CD4-positive, alpha-beta T cell (primary cell): ENCODE measurements at regions of chr1 and their contacts with region 1.

Region 1: GRCh38 chr1:100265931-100266740 is at the start of gene RTCA:
- DNase-seq: peak; percentile 88 to 98 (median 94)
- ATAC-seq: peak; percentile 95
- H3K4me3 ChIP-seq: peak within 1 kb of the TSS; percentile 96
- H3K4me3 Mint-ChIP-seq: peak within 1 kb of the TSS; percentile 99
- H3K27ac ChIP-seq: peak within 1 kb of the TSS; percentile 62 to 67
- H3K27ac Mint-ChIP-seq: peak within 1 kb of the TSS; percentile 93
- H3K4me1 ChIP-seq: peaks cover 41% of the 10 kb centered on the region
- H3K4me1 Mint-ChIP-seq: peaks cover 60% of the 10 kb centered on the region
- H3K27me3 ChIP-seq: no peaks in the 10 kb centered on the region
- H3K27me3 Mint-ChIP-seq: no peaks in the 10 kb centered on the region
- CTCF ChIP-seq: no peak
- total RNA-seq, gene RTCA: 62.1 to 67.1 TPM

Region 2: DNA sequence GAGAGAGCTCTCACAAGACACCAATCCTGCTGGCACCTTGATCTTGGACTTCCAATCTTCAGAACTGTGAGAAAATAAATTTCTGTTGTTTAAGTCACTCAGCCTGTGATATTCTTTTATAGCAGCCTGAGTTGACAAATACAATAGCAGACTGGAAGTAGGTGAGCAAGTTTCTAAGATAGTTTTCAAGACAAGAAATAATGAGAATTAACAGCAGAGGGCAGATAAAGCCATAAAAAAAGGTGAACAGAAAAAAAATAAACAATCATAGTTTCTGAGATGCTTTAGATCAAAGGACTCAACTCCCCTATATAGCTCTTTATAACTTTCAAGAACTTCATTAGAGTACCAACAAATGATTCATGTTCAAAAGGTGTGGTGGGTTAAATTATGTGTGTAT is 1381.3 kb before region 1 on chr1:
- CTCF ChIA-PET with region 1: no interaction called
- POLR2A ChIA-PET with region 1: no interaction called
- intact Hi-C with region 1: no loop called
- DNase-seq: no peak
- ATAC-seq: no peak
- H3K4me3 ChIP-seq: no peak overlapping the region
- H3K4me3 Mint-ChIP-seq: no peak overlapping the region
- H3K27ac ChIP-seq: no peak overlapping the region
- H3K27ac Mint-ChIP-seq: no peak overlapping the region
- H3K4me1 ChIP-seq: no peaks in the 10 kb centered on the region
- H3K4me1 Mint-ChIP-seq: peaks cover 12% of the 10 kb centered on the region
- H3K27me3 ChIP-seq: no peaks in the 10 kb centered on the region
- H3K27me3 Mint-ChIP-seq: no peaks in the 10 kb centered on the region
- CTCF ChIP-seq: no peak

Region 3: GRCh38 chr1:100206301-100206700 is 59.8 kb before region 1 on chr1:
- CTCF ChIA-PET with region 1: no interaction called
- POLR2A ChIA-PET with region 1: no interaction called
- intact Hi-C with region 1: no loop called
- DNase-seq: no peak
- ATAC-seq: no peak
- H3K4me3 ChIP-seq: no peak overlapping the region
- H3K4me3 Mint-ChIP-seq: no peak overlapping the region
- H3K27ac ChIP-seq: no peak overlapping the region
- H3K27ac Mint-ChIP-seq: no peak overlapping the region
- H3K4me1 ChIP-seq: no peaks in the 10 kb centered on the region
- H3K4me1 Mint-ChIP-seq: peaks cover 10% of the 10 kb centered on the region
- H3K27me3 ChIP-seq: no peaks in the 10 kb centered on the region
- H3K27me3 Mint-ChIP-seq: no peaks in the 10 kb centered on the region
- CTCF ChIP-seq: no peak

Region 4: GRCh38 chr1:100249537-100250257 is 16.4 kb before region 1 on chr1 and contains the start of gene DBT:
- CTCF ChIA-PET with region 1: interaction called, 5 read pairs
- POLR2A ChIA-PET with region 1: interaction called, 83 read pairs
- intact Hi-C with region 1: loop called (anchors 1 kb)
- DNase-seq: peak; percentile 82 to 95 (median 86)
- ATAC-seq: peak; percentile 99
- H3K4me3 ChIP-seq: peak within 1 kb of the TSS; percentile 88
- H3K4me3 Mint-ChIP-seq: no peak within 1 kb of the TSS
- H3K27ac ChIP-seq: peak within 1 kb of the TSS; percentile 51 to 69
- H3K27ac Mint-ChIP-seq: no peak within 1 kb of the TSS
- H3K4me1 ChIP-seq: peaks cover 11% of the 10 kb centered on the region
- H3K4me1 Mint-ChIP-seq: peaks cover 15% of the 10 kb centered on the region
- H3K27me3 ChIP-seq: no peaks in the 10 kb centered on the region
- H3K27me3 Mint-ChIP-seq: no peaks in the 10 kb centered on the region
- CTCF ChIP-seq: no peak
- total RNA-seq, gene DBT: 5.3 to 5.4 TPM

Region 5: GRCh38 chr1:100279954-100280682 is 14.0 kb after region 1 on chr1:
- CTCF ChIA-PET with region 1: no interaction called
- POLR2A ChIA-PET with region 1: no interaction called
- intact Hi-C with region 1: no loop called
- DNase-seq: no peak
- ATAC-seq: no peak
- H3K4me3 ChIP-seq: no peak overlapping the region
- H3K4me3 Mint-ChIP-seq: no peak overlapping the region
- H3K27ac ChIP-seq: no peak overlapping the region
- H3K27ac Mint-ChIP-seq: no peak overlapping the region
- H3K4me1 ChIP-seq: no peaks in the 10 kb centered on the region
- H3K4me1 Mint-ChIP-seq: peaks cover 40% of the 10 kb centered on the region
- H3K27me3 ChIP-seq: no peaks in the 10 kb centered on the region
- H3K27me3 Mint-ChIP-seq: no peaks in the 10 kb centered on the region
- CTCF ChIP-seq: no peak